Heart right ventricle (tissue), 16 donors: ENCODE measurements at regions of chr16 and their contacts with region 1.

Region 1: DNA sequence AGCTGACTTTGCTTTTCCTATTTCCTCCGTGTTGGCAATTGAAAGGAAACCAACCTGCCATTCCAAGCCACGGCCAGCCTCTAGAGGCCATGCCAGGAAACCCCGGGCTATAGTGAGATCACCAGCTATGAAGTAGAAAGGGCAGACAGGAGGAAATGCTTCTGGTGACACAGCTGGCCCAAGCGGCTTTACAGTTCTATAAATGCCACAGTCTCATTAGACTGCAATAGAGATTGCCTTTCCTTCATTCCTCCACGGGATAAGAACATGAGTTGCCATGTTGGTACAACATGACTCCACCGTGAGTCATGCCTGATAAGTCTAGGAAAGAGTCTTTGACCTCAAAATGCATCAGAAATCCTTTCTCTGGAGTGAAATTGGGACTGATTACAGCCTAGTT is 384.9 kb downstream of the GRIN2A start:
- DNase-seq: peak; percentile 21 to 40
- ATAC-seq: peak; percentile 61 to 94 (median 86)
- H3K4me3 ChIP-seq: peak overlapping the region in 6 of 10 donors; percentile 3 to 31 (median 20)
- H3K27ac ChIP-seq: peak overlapping the region; percentile 48 to 95 (median 80)
- H3K4me1 ChIP-seq: peaks cover 0 to 26% (median 9%) of the 10 kb centered on the region in 9 donors
- H3K27me3 ChIP-seq: no peaks in the 10 kb centered on the region
- CTCF ChIP-seq: peak in 1 of 9 donors; percentile 5

Region 2: DNA sequence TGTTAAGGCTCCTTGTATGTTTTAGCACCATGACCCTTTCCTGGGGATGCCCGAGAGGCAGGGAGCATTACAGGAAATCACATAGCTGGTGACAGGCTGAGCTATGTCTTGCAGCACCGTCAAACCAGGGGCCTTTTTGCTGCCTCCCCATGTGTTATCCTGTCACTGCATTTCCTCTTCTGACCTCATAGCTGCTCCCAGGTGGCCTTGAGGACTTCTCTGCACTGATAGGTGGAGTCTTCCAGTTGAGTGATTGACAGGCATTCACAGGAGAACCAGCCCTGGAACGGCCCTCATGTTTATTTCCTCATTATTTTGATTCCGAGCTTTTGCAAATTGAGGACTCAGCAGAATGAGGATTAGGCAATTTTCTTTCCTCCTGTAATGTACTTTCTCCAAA is 356.3 kb before region 1 on chr16:
- intact Hi-C with region 1: loop called in 1 of 10 experiments (anchors 10 kb)
- DNase-seq: no peak
- ATAC-seq: peak in 1 of 8 donors; percentile 48
- H3K4me3 ChIP-seq: no peak overlapping the region
- H3K27ac ChIP-seq: no peak overlapping the region
- H3K4me1 ChIP-seq: no peaks in the 10 kb centered on the region
- H3K27me3 ChIP-seq: no peaks in the 10 kb centered on the region
- CTCF ChIP-seq: no peak

Region 3: DNA sequence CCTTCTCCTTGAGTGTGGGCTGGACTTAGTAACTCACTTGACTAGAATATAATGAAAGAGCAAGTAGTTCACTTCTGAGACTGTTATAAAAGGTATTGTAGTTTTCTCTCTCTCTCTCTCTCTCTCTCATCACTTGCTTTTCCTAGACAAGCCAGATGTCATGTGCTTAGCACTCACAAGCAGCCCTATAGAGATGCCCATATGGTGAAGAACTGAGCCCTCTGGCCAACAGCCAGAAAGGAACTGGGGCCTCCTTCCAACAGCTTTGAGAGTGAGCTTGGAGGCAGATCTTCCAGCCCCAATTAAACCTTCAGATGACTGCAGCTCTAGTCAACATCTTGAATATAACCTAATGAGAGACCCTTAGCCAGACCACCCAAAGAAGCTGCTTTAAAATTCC is 55.5 kb before region 1 on chr16:
- intact Hi-C with region 1: no loop called
- DNase-seq: no peak
- ATAC-seq: no peak
- H3K4me3 ChIP-seq: no peak overlapping the region
- H3K27ac ChIP-seq: no peak overlapping the region
- H3K4me1 ChIP-seq: no peaks in the 10 kb centered on the region
- H3K27me3 ChIP-seq: no peaks in the 10 kb centered on the region
- CTCF ChIP-seq: no peak

Region 4: DNA sequence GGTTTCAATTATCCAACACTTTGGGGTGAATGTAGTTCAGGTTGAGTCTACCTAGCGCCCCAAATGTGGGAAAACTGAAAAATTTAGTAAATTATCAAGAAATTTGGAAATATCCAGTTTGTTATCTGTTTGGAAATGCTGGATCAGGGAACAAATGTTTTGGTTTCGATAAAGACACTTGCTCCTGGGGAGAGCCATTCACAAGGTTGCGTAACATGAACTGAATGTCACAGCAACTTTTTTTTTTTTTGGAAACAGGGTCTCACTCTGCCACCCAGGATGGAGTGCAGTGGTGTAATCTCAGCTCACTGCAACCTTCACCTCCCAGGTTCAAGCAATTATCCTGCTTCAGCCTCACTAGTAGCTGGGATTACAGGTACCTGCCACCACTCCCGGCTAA is 98.5 kb after region 1 on chr16:
- intact Hi-C with region 1: no loop called
- DNase-seq: no peak
- ATAC-seq: no peak
- H3K4me3 ChIP-seq: no peak overlapping the region
- H3K27ac ChIP-seq: no peak overlapping the region
- H3K4me1 ChIP-seq: peaks cover 0 to 5% (median 0%) of the 10 kb centered on the region in 9 donors
- H3K27me3 ChIP-seq: peaks cover 0 to 6% (median 0%) of the 10 kb centered on the region in 7 donors
- CTCF ChIP-seq: no peak